ENCODE measurements at regions of chr19 and their contacts with region 1.

Region 1: GRCh38 chr19:17255150-17255621 is 9.4 kb downstream of the USHBP1 start:
- DNase-seq: peak; percentile 77 to 95
- H3K4me3 ChIP-seq: no peak overlapping the region
- H3K27ac ChIP-seq: peak overlapping the region; percentile 68
- H3K4me1 ChIP-seq: peaks cover 17% of the 10 kb centered on the region
- H3K27me3 ChIP-seq: no peaks in the 10 kb centered on the region
- CTCF ChIP-seq: no peak

Region 2: DNA sequence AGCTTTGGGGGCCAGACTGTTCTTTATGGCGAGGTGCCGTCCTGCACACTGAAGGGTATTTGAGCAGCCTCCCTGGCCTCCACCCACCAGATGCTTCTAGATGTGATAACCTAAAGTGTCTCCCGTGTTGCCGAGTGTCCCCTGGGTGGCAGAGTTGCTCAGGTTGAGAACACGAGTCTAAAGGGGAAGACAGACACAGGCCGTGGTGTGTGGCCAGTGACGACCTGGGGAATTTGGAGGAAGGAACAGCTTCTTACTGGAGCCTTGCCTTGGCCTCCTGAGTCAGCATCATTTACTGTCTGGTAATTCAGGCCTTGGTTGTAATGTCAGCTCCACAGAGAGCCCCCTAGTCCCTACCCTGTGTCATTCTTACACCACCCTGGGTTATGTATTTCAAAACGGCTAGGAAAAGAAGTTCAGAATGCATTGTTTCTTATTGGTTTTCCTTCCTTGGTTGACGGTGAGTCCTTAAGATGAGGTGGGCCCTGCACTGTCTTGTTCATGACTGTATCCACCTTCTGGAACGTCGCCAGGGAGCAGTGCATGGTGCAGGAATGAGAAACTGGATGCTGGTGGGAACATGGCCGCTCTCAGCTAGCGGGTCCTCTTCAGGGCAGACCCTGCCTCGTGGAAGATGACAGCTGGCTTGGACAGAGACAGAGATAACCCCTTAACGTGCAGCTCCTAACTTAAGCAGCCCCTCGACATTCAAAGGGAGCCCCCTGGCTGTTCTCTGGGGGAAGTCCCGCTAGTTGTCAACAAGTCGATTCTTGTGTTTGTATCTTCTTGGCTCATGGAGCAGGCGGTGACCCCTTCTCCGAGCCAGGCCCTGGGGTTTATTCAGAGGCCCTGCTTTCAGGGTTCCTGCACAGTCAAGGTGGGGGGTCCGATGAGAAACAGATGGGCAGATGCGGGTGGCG is 418.8 kb before region 1 on chr19:
- CTCF ChIA-PET with region 1: no interaction called
- POLR2A ChIA-PET with region 1: no interaction called
- intact Hi-C with region 1: no loop called
- DNase-seq: no peak
- H3K4me3 ChIP-seq: no peak overlapping the region
- H3K27ac ChIP-seq: no peak overlapping the region
- H3K4me1 ChIP-seq: no peaks in the 10 kb centered on the region
- H3K27me3 ChIP-seq: no peaks in the 10 kb centered on the region
- CTCF ChIP-seq: no peak

Region 3: GRCh38 chr19:17266975-17267788 is 12.0 kb after region 1 on chr19 and contains the start of gene BABAM1:
- CTCF ChIA-PET with region 1: interaction called, 6 read pairs
- POLR2A ChIA-PET with region 1: interaction called, 13 read pairs
- intact Hi-C with region 1: no loop called
- DNase-seq: peak; percentile 94 to 99
- H3K4me3 ChIP-seq: peak within 1 kb of the TSS; percentile 86
- H3K27ac ChIP-seq: peak within 1 kb of the TSS; percentile 70
- H3K4me1 ChIP-seq: peaks cover 25% of the 10 kb centered on the region
- H3K27me3 ChIP-seq: no peaks in the 10 kb centered on the region
- CTCF ChIP-seq: no peak
- total RNA-seq, gene BABAM1: 127 and 152 TPM in 2 replicates

Measured in PC-9 (cell line).